B cell (primary cell): ENCODE measurements at regions of chr2 and their contacts with region 1.

Region 1: GRCh38 chr2:219160186-219161017 is at the start of gene NHEJ1:
- DNase-seq: peak; percentile 98
- ATAC-seq: peak; percentile 86
- H3K4me3 ChIP-seq: peak within 1 kb of the TSS; percentile 39 to 84 (median 72)
- H3K4me3 Mint-ChIP-seq: peak within 1 kb of the TSS; percentile 98
- H3K27ac ChIP-seq: peak within 1 kb of the TSS; percentile 56 to 63
- H3K27ac Mint-ChIP-seq: peak within 1 kb of the TSS; percentile 97
- H3K4me1 ChIP-seq: peaks cover 9 to 13% of the 10 kb centered on the region in 2 donors
- H3K4me1 Mint-ChIP-seq: peaks cover 21% of the 10 kb centered on the region
- H3K27me3 ChIP-seq: no peaks in the 10 kb centered on the region
- H3K27me3 Mint-ChIP-seq: no peaks in the 10 kb centered on the region
- CTCF ChIP-seq: peak; percentile 97
- total RNA-seq, gene NHEJ1: 20.3 and 25.0 TPM in 2 replicates

Region 2: GRCh38 chr2:218710687-218711549 is 449.5 kb before region 1 on chr2 and contains the start of gene TTLL4:
- CTCF ChIA-PET with region 1: no interaction called
- POLR2A ChIA-PET with region 1: no interaction called
- intact Hi-C with region 1: loop called (anchors 2 kb)
- DNase-seq: peak; percentile 99
- ATAC-seq: peak; percentile 98
- H3K4me3 ChIP-seq: peak within 1 kb of the TSS; percentile 71 to 94 (median 79)
- H3K4me3 Mint-ChIP-seq: peak within 1 kb of the TSS; percentile 95
- H3K27ac ChIP-seq: peak within 1 kb of the TSS; percentile 64 to 96
- H3K27ac Mint-ChIP-seq: peak within 1 kb of the TSS; percentile 90
- H3K4me1 ChIP-seq: peaks cover 18 to 21% of the 10 kb centered on the region in 2 donors
- H3K4me1 Mint-ChIP-seq: peaks cover 26% of the 10 kb centered on the region
- H3K27me3 ChIP-seq: peaks cover 0 to 2% (median 0%) of the 10 kb centered on the region in 4 experiments
- H3K27me3 Mint-ChIP-seq: peaks cover 3% of the 10 kb centered on the region
- CTCF ChIP-seq: peak; percentile 84
- total RNA-seq, gene TTLL4: 30.6 and 33.8 TPM in 2 replicates

Region 3: DNA sequence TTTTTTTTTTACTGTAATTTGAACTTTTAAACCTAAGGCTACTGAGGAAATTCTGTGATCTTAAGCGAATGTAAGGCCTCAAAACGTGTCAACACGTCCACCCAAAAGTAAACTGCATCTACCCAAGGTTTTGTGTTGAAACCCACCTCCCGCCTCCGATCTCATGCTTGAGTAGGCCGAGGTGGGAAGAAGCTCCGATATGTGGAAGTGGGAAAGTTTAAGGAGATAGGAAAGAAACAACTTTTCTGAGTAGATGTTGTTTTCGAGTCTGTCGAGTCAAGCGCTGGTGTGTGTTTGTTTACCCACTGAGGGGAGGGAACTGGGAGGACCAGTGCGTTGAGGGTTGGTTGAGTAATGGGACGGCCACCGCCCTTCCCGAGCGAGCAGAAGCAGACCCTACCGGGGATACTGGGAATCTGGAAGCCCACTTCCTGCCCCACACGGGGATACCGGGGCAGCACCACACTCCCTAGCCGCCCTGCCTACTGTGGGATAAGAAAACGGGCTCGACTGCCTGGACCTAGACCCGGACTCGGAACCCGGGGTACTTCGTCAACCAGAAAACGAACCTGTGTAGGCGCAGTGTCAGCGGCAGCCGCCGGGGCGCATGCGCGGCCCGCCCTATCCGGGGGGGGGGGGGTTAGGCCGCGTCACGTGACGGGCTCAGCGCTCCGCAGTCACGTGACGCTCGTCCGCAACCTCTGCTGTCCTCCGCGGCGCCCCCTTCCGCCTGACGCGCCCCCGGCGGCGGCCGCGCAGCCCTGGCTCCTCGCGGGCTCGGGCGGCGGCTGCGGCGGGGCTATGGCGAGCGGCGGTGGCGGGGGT is 17.4 kb after region 1 on chr2 and contains the start of gene RETREG2:
- CTCF ChIA-PET with region 1: interaction called, 21 read pairs
- POLR2A ChIA-PET with region 1: interaction called, 8 read pairs
- intact Hi-C with region 1: loop called (anchors 1 kb)
- DNase-seq: peak; percentile 97
- ATAC-seq: peak; percentile 44
- H3K4me3 ChIP-seq: peak within 1 kb of the TSS; percentile 87 to 97 (median 95)
- H3K4me3 Mint-ChIP-seq: peak within 1 kb of the TSS; percentile 99
- H3K27ac ChIP-seq: peak within 1 kb of the TSS; percentile 94 to 97
- H3K27ac Mint-ChIP-seq: peak within 1 kb of the TSS; percentile 99
- H3K4me1 ChIP-seq: peaks cover 17 to 48% of the 10 kb centered on the region in 2 donors
- H3K4me1 Mint-ChIP-seq: peaks cover 46% of the 10 kb centered on the region
- H3K27me3 ChIP-seq: no peaks in the 10 kb centered on the region
- H3K27me3 Mint-ChIP-seq: no peaks in the 10 kb centered on the region
- CTCF ChIP-seq: peak; percentile 55
- total RNA-seq, gene RETREG2: 86.3 and 102 TPM in 2 replicates

Region 4: DNA sequence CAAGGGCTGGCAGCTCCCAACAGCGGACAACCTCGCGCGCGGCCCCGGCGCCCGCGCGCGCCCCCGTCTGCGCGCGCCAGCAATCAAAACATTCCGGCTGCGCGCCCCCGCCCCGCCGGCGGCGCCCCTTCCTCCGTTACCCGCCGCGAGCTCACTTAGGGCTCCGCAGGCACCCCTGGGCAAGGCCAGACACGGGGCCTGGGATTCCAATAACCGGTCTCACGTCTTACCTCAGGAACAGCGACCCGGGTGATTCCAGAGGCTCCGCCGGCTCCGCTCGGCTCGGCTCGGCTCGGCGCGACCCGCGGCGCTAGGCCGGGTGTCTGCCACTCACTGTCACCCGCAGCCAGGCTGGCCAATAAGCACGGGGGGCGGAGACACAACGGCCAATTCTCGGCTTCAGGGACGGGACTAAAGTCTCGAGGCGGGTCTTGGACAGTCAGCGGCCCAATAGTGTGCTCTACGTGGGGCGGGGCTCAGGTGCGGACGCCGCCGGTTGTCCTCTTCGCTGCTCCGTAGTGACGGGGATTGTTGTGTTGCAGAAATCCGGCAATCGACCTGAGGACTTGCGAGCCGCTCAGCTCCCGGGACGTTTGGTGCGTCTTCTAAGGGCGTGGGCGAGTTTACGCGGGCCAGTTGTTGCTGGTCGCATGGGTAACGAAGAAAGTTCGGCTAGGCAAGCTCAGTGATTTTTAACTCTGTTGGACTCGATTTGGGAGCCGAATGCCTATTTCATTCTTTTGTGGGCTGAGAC is 69.1 kb after region 1 on chr2 and contains the starts of genes ANKZF1 and ATG9A:
- CTCF ChIA-PET with region 1: interaction called, 4 read pairs
- POLR2A ChIA-PET with region 1: no interaction called
- intact Hi-C with region 1: loop called (anchors 1 kb)
- DNase-seq: peak; percentile 98
- ATAC-seq: peak; percentile 97
- H3K4me3 ChIP-seq: peak within 1 kb of the TSS; percentile 86 to 98 (median 92)
- H3K4me3 Mint-ChIP-seq: peak within 1 kb of the TSS; percentile 99
- H3K27ac ChIP-seq: peak within 1 kb of the TSS; percentile 74 to 87
- H3K27ac Mint-ChIP-seq: peak within 1 kb of the TSS; percentile 98
- H3K4me1 ChIP-seq: peaks cover 17 to 23% of the 10 kb centered on the region in 2 donors
- H3K4me1 Mint-ChIP-seq: peaks cover 38% of the 10 kb centered on the region
- H3K27me3 ChIP-seq: no peaks in the 10 kb centered on the region
- H3K27me3 Mint-ChIP-seq: no peaks in the 10 kb centered on the region
- CTCF ChIP-seq: no peak
- total RNA-seq, gene ANKZF1: 181 and 199 TPM in 2 replicates
- total RNA-seq, gene ATG9A: 59.4 and 65.5 TPM in 2 replicates

Region 5: GRCh38 chr2:219278655-219279516 is 118.5 kb after region 1 on chr2 and contains the start of gene DNAJB2:
- CTCF ChIA-PET with region 1: interaction called, 9 read pairs
- POLR2A ChIA-PET with region 1: interaction called, 5 read pairs
- intact Hi-C with region 1: loop called (anchors 1 kb)
- DNase-seq: peak; percentile 99
- ATAC-seq: peak; percentile 76
- H3K4me3 ChIP-seq: peak within 1 kb of the TSS; percentile 49 to 80 (median 77)
- H3K4me3 Mint-ChIP-seq: peak within 1 kb of the TSS; percentile 92
- H3K27ac ChIP-seq: peak within 1 kb of the TSS; percentile 98 to 100
- H3K27ac Mint-ChIP-seq: peak within 1 kb of the TSS; percentile 96
- H3K4me1 ChIP-seq: peaks cover 32 to 48% of the 10 kb centered on the region in 2 donors
- H3K4me1 Mint-ChIP-seq: peaks cover 48% of the 10 kb centered on the region
- H3K27me3 ChIP-seq: no peaks in the 10 kb centered on the region
- H3K27me3 Mint-ChIP-seq: no peaks in the 10 kb centered on the region
- CTCF ChIP-seq: no peak
- total RNA-seq, gene DNAJB2: 169 and 184 TPM in 2 replicates

Region 6: DNA sequence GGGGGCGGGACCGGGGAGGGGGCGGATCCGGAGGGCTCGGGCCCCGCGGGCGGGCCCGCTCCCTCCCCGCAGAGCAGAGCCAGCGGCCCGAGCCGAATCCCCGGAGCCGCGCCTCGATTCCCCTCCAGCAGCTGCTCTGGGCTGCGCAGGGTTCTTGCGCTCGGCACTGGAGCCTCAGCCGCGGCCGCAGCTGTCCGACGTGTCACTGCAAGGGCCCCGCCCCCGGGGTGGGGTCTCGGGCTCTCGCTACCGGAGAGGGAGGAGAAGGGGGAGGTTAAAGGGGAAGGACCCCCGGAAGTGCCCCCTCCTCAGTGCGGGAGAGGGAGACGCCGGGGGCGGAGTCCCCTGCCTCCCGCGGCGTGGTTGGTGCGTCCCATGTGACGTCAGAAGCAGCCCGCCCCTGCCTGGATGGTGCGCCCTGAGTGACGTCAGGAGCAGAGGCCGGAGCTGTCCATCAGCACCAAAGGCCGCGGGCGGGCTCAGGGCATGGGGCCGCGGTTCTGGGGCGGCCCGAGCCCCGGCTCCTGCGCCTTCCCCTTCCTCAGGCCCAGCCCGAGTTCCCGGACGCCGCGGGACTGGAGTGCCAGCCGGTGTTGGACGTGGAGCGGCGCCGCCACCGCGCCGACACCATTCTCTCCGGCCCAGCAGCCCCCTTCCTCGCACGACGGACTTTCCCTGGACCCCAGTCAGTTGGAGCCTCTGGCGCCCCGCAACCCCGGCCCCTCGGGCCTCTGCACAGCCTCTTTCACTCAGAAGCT is 383.4 kb after region 1 on chr2 and contains the starts of genes CHPF and TMEM198:
- CTCF ChIA-PET with region 1: no interaction called
- POLR2A ChIA-PET with region 1: no interaction called
- intact Hi-C with region 1: loop called (anchors 2 kb)
- DNase-seq: peak; percentile 93
- ATAC-seq: peak; percentile 80
- H3K4me3 ChIP-seq: peak within 1 kb of the TSS in 4 of 5 experiments; percentile 63 to 78 (median 67)
- H3K4me3 Mint-ChIP-seq: peak within 1 kb of the TSS; percentile 83
- H3K27ac ChIP-seq: peak within 1 kb of the TSS in 1 of 2 donors; percentile 35
- H3K27ac Mint-ChIP-seq: peak within 1 kb of the TSS; percentile 50
- H3K4me1 ChIP-seq: peaks cover 29 to 31% of the 10 kb centered on the region in 2 donors
- H3K4me1 Mint-ChIP-seq: peaks cover 24% of the 10 kb centered on the region
- H3K27me3 ChIP-seq: peaks cover 0 to 82% (median 21%) of the 10 kb centered on the region in 4 experiments
- H3K27me3 Mint-ChIP-seq: peaks cover 40% of the 10 kb centered on the region
- CTCF ChIP-seq: no peak
- total RNA-seq, gene CHPF: 1.2 and 1.3 TPM in 2 replicates
- total RNA-seq, gene TMEM198: 0.39 TPM in 1 of 2 replicates, not detected in the other